Dorsolateral prefrontal cortex (tissue), 120 donors: ENCODE measurements at regions of chr12 and their contacts with region 1.

Region 1: DNA sequence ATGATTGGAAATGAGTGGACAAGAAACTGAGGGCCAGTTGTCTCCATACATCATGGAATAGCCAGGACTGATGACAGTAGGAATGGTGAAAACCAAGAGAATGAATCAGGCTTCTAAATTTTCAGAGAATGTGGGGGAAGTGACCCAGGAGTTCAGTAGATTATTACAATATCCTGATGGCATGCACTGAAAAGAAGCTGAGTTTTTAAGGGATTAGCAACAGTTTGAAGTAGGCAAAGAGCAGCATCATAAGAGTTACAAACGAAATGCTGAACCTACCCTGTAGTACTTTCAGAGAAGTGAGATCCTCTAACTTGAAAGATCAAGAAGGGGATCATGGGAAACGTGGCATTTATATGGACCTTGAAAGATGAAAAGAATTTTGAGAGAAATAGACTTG is 13.2 kb downstream of the SLC2A14 start:
- DNase-seq: no peak
- H3K4me3 ChIP-seq: no peak overlapping the region
- H3K27ac ChIP-seq: peak overlapping the region in 7 of 59 donors; percentile 1 to 46 (median 4)
- H3K27me3 ChIP-seq: no peaks in the 10 kb centered on the region
- CTCF ChIP-seq: no peak

Region 2: GRCh38 chr12:7705831-7706230 is 153.7 kb before region 1 on chr12:
- intact Hi-C with region 1: no loop called
- DNase-seq: no peak
- H3K4me3 ChIP-seq: no peak overlapping the region
- H3K27ac ChIP-seq: no peak overlapping the region
- H3K27me3 ChIP-seq: no peaks in the 10 kb centered on the region
- CTCF ChIP-seq: no peak

Region 3: GRCh38 chr12:7907009-7907408 is 47.5 kb after region 1 on chr12:
- intact Hi-C with region 1: no loop called
- DNase-seq: no peak
- H3K4me3 ChIP-seq: no peak overlapping the region
- H3K27ac ChIP-seq: no peak overlapping the region
- H3K27me3 ChIP-seq: no peaks in the 10 kb centered on the region
- CTCF ChIP-seq: peak in 1 of 56 donors; percentile 11

Region 4: DNA sequence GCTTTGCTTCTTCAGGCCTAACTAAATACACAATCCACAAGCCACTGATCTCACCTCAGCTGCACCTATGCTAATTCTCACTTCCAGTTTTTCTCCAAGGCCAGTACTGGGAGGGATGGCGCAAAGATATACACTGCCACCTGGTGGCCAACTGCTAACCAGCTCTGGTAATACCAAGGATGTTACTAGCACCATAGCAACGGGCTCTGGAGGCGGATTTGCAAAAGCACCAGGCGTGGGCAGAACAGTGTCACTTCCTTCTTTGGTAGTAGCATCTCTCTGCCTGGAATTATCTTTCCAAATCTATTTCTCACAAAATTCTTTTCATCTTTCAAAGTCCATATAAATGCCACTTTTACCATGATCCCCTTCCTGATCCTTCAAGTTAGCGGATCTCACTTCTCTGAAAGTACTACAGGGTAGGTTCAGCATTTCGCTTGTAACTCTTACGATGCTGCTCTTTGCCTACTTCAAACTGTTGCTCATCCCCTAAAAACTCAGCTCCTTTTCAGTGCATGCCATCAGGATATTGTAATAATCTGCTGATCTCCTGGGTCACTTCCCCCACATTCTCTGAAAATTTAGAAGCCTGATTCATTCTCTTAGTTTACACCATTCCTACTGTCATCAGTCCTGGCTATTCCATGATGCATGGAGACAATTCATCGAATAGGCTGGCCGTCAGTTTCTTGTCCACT is 135.9 kb after region 1 on chr12:
- intact Hi-C with region 1: loop called (anchors 5 kb)
- DNase-seq: peak; percentile 49 to 95 (median 86)
- H3K4me3 ChIP-seq: peak overlapping the region in 21 of 59 donors; percentile 1 to 41 (median 24)
- H3K27ac ChIP-seq: peak overlapping the region in 34 of 59 donors; percentile 0 to 77 (median 36)
- H3K27me3 ChIP-seq: no peaks in the 10 kb centered on the region
- CTCF ChIP-seq: peak; percentile 67 to 97 (median 90)